B cell (primary cell): ENCODE measurements at regions of chr6 and their contacts with region 1.

Region 1: DNA sequence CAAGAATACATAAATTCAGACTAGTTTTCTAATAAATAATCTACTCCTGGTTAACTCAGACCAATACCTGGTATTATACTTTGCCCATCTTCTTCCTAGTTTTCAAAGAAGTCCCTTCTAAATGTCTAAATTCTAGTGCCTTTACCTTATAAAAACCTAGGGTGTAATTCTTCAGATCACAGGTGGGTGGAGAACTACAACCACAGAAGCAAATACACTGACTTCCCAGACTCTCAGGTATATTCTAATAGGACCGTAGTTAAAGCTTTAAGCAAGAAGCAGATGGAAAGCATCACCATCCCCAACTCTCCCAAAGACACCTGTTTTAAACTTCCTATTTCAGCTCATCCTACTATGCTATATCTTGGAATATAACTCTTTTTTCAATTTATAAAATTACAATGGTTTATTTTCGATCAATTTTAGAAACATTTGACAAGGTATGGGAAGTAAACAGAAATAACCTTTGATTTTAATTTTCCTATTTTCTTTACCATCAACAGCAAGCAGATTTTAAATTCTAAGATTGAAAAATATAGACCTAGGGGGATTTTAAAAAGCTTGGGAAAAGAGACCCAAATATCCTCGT is 15.8 kb downstream of the MAN1A1 start:
- DNase-seq: peak; percentile 57
- ATAC-seq: peak; percentile 69
- H3K4me3 ChIP-seq: no peak overlapping the region
- H3K4me3 Mint-ChIP-seq: no peak overlapping the region
- H3K27ac ChIP-seq: no peak overlapping the region
- H3K27ac Mint-ChIP-seq: no peak overlapping the region
- H3K4me1 ChIP-seq: peaks cover 12 to 16% of the 10 kb centered on the region in 2 donors
- H3K4me1 Mint-ChIP-seq: peaks cover 38% of the 10 kb centered on the region
- H3K27me3 ChIP-seq: no peaks in the 10 kb centered on the region
- H3K27me3 Mint-ChIP-seq: no peaks in the 10 kb centered on the region
- CTCF ChIP-seq: peak; percentile 81

Region 2: DNA sequence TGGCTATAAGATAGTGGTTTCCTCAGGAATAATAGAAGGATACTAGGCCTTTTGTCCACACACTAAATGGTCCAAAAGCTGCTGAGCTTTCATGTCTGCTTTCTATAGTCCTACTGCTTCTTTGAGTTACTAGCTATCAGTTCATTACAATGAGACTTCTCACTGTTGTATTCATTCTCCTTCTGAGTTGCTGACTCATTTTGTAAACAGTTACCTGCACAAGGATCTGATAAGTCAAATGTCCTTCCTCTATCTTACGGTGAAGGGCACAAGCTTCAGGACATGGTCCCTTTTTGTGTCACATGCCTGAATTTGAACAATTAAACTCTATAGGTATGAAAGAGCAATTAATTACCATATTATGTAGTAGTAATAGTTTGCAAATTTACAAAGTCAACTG is 74.8 kb before region 1 on chr6:
- CTCF ChIA-PET with region 1: no interaction called
- POLR2A ChIA-PET with region 1: no interaction called
- intact Hi-C with region 1: no loop called
- DNase-seq: no peak
- ATAC-seq: no peak
- H3K4me3 ChIP-seq: no peak overlapping the region
- H3K4me3 Mint-ChIP-seq: no peak overlapping the region
- H3K27ac ChIP-seq: no peak overlapping the region
- H3K27ac Mint-ChIP-seq: no peak overlapping the region
- H3K4me1 ChIP-seq: no peaks in the 10 kb centered on the region
- H3K4me1 Mint-ChIP-seq: no peaks in the 10 kb centered on the region
- H3K27me3 ChIP-seq: no peaks in the 10 kb centered on the region
- H3K27me3 Mint-ChIP-seq: no peaks in the 10 kb centered on the region
- CTCF ChIP-seq: no peak

Region 3: DNA sequence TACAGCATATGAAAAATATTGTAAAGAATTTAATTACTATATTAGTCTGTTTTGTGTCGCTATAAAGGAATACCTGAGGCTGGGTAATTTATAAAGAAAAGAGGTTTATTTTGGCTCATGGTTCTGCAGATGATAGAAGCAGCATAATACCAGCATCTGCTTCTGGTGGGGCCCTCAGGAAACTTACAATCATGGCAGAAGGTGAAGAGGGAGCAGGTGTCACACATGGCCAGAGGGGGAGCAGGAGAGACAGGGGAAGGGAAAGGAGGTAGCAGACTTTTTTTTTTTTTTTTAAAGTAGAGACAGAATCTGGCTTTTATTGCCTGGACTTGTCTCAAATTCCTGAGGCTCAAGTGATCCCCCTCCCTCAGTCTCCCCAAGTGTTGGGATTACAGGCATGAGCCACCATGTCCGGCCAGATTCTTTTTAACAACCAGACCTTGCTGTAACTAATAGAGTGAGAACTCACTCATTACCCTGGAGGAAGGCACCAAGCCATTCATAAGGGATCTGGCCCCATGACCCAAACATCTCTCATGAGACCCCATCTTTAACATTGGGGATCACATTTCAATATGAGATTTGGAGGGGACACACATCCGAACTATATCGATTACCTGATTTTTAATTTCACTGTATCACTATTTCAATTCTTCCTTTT is 48.8 kb before region 1 on chr6:
- CTCF ChIA-PET with region 1: no interaction called
- POLR2A ChIA-PET with region 1: no interaction called
- intact Hi-C with region 1: no loop called
- DNase-seq: peak; percentile 4
- ATAC-seq: no peak
- H3K4me3 ChIP-seq: no peak overlapping the region
- H3K4me3 Mint-ChIP-seq: no peak overlapping the region
- H3K27ac ChIP-seq: no peak overlapping the region
- H3K27ac Mint-ChIP-seq: no peak overlapping the region
- H3K4me1 ChIP-seq: no peaks in the 10 kb centered on the region
- H3K4me1 Mint-ChIP-seq: peaks cover 3% of the 10 kb centered on the region
- H3K27me3 ChIP-seq: no peaks in the 10 kb centered on the region
- H3K27me3 Mint-ChIP-seq: no peaks in the 10 kb centered on the region
- CTCF ChIP-seq: peak; percentile 21

Region 4: GRCh38 chr6:119742188-119742803 is 408.5 kb after region 1 on chr6:
- CTCF ChIA-PET with region 1: interaction called, 7 read pairs
- POLR2A ChIA-PET with region 1: no interaction called
- intact Hi-C with region 1: loop called (anchors 2 kb)
- DNase-seq: peak; percentile 71
- ATAC-seq: peak; percentile 63
- H3K4me3 ChIP-seq: no peak overlapping the region
- H3K4me3 Mint-ChIP-seq: no peak overlapping the region
- H3K27ac ChIP-seq: no peak overlapping the region
- H3K27ac Mint-ChIP-seq: no peak overlapping the region
- H3K4me1 ChIP-seq: peaks cover 0 to 6% of the 10 kb centered on the region in 2 donors
- H3K4me1 Mint-ChIP-seq: peaks cover 6% of the 10 kb centered on the region
- H3K27me3 ChIP-seq: no peaks in the 10 kb centered on the region
- H3K27me3 Mint-ChIP-seq: no peaks in the 10 kb centered on the region
- CTCF ChIP-seq: peak; percentile 89

Region 5: GRCh38 chr6:119978274-119978889 is 644.6 kb after region 1 on chr6:
- CTCF ChIA-PET with region 1: interaction called, 11 read pairs
- POLR2A ChIA-PET with region 1: no interaction called
- intact Hi-C with region 1: loop called (anchors 2 kb)
- DNase-seq: peak; percentile 21
- ATAC-seq: no peak
- H3K4me3 ChIP-seq: no peak overlapping the region
- H3K4me3 Mint-ChIP-seq: no peak overlapping the region
- H3K27ac ChIP-seq: no peak overlapping the region
- H3K27ac Mint-ChIP-seq: no peak overlapping the region
- H3K4me1 ChIP-seq: no peaks in the 10 kb centered on the region
- H3K4me1 Mint-ChIP-seq: peaks cover 9% of the 10 kb centered on the region
- H3K27me3 ChIP-seq: no peaks in the 10 kb centered on the region
- H3K27me3 Mint-ChIP-seq: no peaks in the 10 kb centered on the region
- CTCF ChIP-seq: peak; percentile 35

Region 6: GRCh38 chr6:120378582-120379220 is 1044.9 kb after region 1 on chr6:
- CTCF ChIA-PET with region 1: no interaction called
- POLR2A ChIA-PET with region 1: no interaction called
- intact Hi-C with region 1: loop called (anchors 5 kb)
- DNase-seq: peak; percentile 50
- ATAC-seq: no peak
- H3K4me3 ChIP-seq: no peak overlapping the region
- H3K4me3 Mint-ChIP-seq: no peak overlapping the region
- H3K27ac ChIP-seq: no peak overlapping the region
- H3K27ac Mint-ChIP-seq: no peak overlapping the region
- H3K4me1 ChIP-seq: no peaks in the 10 kb centered on the region
- H3K4me1 Mint-ChIP-seq: no peaks in the 10 kb centered on the region
- H3K27me3 ChIP-seq: no peaks in the 10 kb centered on the region
- H3K27me3 Mint-ChIP-seq: no peaks in the 10 kb centered on the region
- CTCF ChIP-seq: peak; percentile 79

Region 7: DNA sequence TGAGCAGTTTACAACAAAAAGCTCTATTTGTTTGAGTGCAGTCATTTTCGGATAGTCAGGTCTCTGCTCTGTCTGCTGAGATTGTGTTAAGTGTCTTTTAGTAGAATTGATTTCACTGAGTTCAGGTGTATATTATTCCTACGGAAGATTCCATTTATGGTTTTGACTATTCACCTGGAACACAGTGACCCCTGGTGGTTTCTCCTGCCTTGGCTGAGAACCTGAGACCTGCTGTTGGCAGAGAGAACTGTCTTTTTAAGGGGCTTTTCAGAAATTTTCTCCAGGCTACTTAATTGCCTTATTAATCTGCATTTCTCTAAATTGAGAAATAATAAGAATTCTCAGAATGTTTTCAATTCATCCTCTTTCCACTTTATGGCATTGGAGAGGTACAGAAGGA is 1492.5 kb after region 1 on chr6:
- CTCF ChIA-PET with region 1: no interaction called
- POLR2A ChIA-PET with region 1: no interaction called
- intact Hi-C with region 1: loop called (anchors 5 kb)
- DNase-seq: peak; percentile 25
- ATAC-seq: no peak
- H3K4me3 ChIP-seq: no peak overlapping the region
- H3K4me3 Mint-ChIP-seq: no peak overlapping the region
- H3K27ac ChIP-seq: no peak overlapping the region
- H3K27ac Mint-ChIP-seq: no peak overlapping the region
- H3K4me1 ChIP-seq: no peaks in the 10 kb centered on the region
- H3K4me1 Mint-ChIP-seq: no peaks in the 10 kb centered on the region
- H3K27me3 ChIP-seq: no peaks in the 10 kb centered on the region
- H3K27me3 Mint-ChIP-seq: no peaks in the 10 kb centered on the region
- CTCF ChIP-seq: peak; percentile 53

Region 8: GRCh38 chr6:121305957-121306607 is 1972.3 kb after region 1 on chr6:
- CTCF ChIA-PET with region 1: no interaction called
- POLR2A ChIA-PET with region 1: no interaction called
- intact Hi-C with region 1: loop called (anchors 5 kb)
- DNase-seq: peak; percentile 39
- ATAC-seq: no peak
- H3K4me3 ChIP-seq: no peak overlapping the region
- H3K4me3 Mint-ChIP-seq: no peak overlapping the region
- H3K27ac ChIP-seq: no peak overlapping the region
- H3K27ac Mint-ChIP-seq: no peak overlapping the region
- H3K4me1 ChIP-seq: no peaks in the 10 kb centered on the region
- H3K4me1 Mint-ChIP-seq: no peaks in the 10 kb centered on the region
- H3K27me3 ChIP-seq: no peaks in the 10 kb centered on the region
- H3K27me3 Mint-ChIP-seq: no peaks in the 10 kb centered on the region
- CTCF ChIP-seq: peak; percentile 79